Endothelial cell of umbilical vein (primary cell): ENCODE measurements at regions of chr1 and their contacts with region 1.

Region 1: DNA sequence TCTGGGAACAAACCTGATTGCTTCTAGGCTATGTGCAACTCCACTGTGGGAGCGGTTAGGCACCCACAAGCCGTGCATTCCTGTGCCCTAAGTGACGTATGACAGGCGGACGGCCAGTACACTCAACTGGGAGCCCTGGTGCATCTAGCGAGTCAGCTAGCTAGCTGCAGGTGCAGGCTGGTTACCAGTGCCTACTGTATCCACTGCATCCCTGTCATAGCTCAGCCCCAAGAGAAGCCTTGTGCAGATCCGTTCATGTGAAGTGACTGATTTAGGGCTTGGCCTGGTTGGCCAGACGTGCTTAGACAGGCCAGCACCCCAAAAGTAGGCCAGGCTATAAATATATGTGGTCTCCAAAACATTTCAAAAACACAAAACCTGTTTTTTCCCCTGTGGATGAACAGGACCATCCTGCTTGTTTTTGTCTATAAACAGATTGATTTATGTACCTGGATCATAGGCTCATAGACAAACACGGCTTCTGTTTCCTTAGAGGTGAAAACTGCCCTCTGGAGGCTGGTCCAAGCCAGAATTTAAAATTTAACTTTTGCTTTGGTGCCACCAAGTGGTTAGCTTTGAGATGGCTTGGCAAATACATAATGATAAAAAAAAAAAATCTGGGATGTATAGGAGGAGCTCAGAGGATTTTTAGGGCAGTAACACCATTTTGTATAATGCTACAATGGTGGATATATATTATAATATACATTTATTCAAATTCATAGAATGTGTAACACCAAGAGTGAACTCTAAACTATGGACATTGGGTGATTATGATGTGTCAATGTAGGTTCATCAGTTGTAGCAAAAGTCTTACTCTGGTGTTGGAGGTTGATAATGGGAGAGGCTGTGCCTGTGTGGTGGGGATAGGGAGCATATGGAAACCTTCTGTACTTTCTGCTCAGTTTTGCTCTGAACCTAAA is 68.5 kb downstream of the GIPC2 start:
- DNase-seq: peak; percentile 93
- H3K4me3 ChIP-seq: no peak overlapping the region
- H3K27ac ChIP-seq: no peak overlapping the region
- H3K4me1 ChIP-seq: no peaks in the 10 kb centered on the region
- H3K27me3 ChIP-seq: no peaks in the 10 kb centered on the region
- CTCF ChIP-seq: peak; percentile 57 to 76
- POLR2A ChIP-seq: no peak

Region 2: GRCh38 chr1:77143529-77144121 is 970.7 kb before region 1 on chr1:
- CTCF ChIA-PET with region 1: no interaction called
- POLR2A ChIA-PET with region 1: no interaction called
- dilution Hi-C with region 1: no loop called
- intact Hi-C with region 1: loop called (anchors 2 kb)
- DNase-seq: peak; percentile 16
- H3K4me3 ChIP-seq: no peak overlapping the region
- H3K27ac ChIP-seq: no peak overlapping the region
- H3K4me1 ChIP-seq: no peaks in the 10 kb centered on the region
- H3K27me3 ChIP-seq: no peaks in the 10 kb centered on the region
- CTCF ChIP-seq: no peak
- POLR2A ChIP-seq: no peak

Region 3: GRCh38 chr1:77948841-77949424 is 165.4 kb before region 1 on chr1:
- CTCF ChIA-PET with region 1: interaction called, 21 read pairs
- POLR2A ChIA-PET with region 1: no interaction called
- dilution Hi-C with region 1: no loop called
- intact Hi-C with region 1: loop called (anchors 1 kb)
- DNase-seq: peak; percentile 74
- H3K4me3 ChIP-seq: peak overlapping the region in 1 of 3 experiments; percentile 28
- H3K27ac ChIP-seq: peak overlapping the region; percentile 18
- H3K4me1 ChIP-seq: peaks cover 15% of the 10 kb centered on the region
- H3K27me3 ChIP-seq: no peaks in the 10 kb centered on the region
- CTCF ChIP-seq: peak; percentile 18 to 30
- POLR2A ChIP-seq: peak; percentile 34

Region 4: GRCh38 chr1:77986810-77987209 is 127.5 kb before region 1 on chr1:
- CTCF ChIA-PET with region 1: interaction called, 50 read pairs
- POLR2A ChIA-PET with region 1: no interaction called
- dilution Hi-C with region 1: no loop called
- intact Hi-C with region 1: no loop called
- DNase-seq: no peak
- H3K4me3 ChIP-seq: no peak overlapping the region
- H3K27ac ChIP-seq: no peak overlapping the region
- H3K4me1 ChIP-seq: no peaks in the 10 kb centered on the region
- H3K27me3 ChIP-seq: no peaks in the 10 kb centered on the region
- CTCF ChIP-seq: no peak
- POLR2A ChIP-seq: no peak

Region 5: GRCh38 chr1:78032996-78033796 is 81.1 kb before region 1 on chr1:
- CTCF ChIA-PET with region 1: interaction called, 15 read pairs
- POLR2A ChIA-PET with region 1: no interaction called
- dilution Hi-C with region 1: no loop called
- intact Hi-C with region 1: no loop called
- DNase-seq: no peak
- H3K4me3 ChIP-seq: no peak overlapping the region
- H3K27ac ChIP-seq: no peak overlapping the region
- H3K4me1 ChIP-seq: peaks cover 8% of the 10 kb centered on the region
- H3K27me3 ChIP-seq: no peaks in the 10 kb centered on the region
- CTCF ChIP-seq: no peak
- POLR2A ChIP-seq: no peak

Region 6: GRCh38 chr1:78070758-78071157 is 43.5 kb before region 1 on chr1:
- CTCF ChIA-PET with region 1: interaction called, 11 read pairs
- POLR2A ChIA-PET with region 1: no interaction called
- dilution Hi-C with region 1: no loop called
- intact Hi-C with region 1: no loop called
- DNase-seq: peak; percentile 87
- H3K4me3 ChIP-seq: no peak overlapping the region
- H3K27ac ChIP-seq: peak overlapping the region; percentile 48
- H3K4me1 ChIP-seq: peaks cover 54% of the 10 kb centered on the region
- H3K27me3 ChIP-seq: no peaks in the 10 kb centered on the region
- CTCF ChIP-seq: no peak
- POLR2A ChIP-seq: no peak

Region 7: DNA sequence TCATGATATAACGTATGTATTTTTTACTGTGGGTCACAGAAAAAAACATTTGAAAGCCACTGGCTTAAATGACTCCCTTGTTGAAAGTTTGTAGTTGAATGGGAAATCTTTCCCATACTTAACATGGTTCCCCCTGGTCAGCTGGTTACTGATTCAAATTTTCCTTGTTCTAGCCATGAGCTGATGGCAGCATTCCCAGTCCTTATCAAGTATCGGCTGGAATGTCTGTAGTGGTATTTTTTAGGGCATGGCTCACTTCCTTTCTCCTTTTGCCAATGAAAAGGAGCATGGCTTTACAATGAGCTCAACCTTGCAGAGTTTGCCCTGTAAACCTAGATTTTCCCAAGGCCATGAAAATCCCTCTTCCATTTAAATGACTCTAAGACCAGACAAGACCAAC is 12.8 kb before region 1 on chr1:
- CTCF ChIA-PET with region 1: interaction called, 49 read pairs
- POLR2A ChIA-PET with region 1: interaction called, 3 read pairs
- dilution Hi-C with region 1: no loop called
- intact Hi-C with region 1: no loop called
- DNase-seq: peak; percentile 99
- H3K4me3 ChIP-seq: no peak overlapping the region
- H3K27ac ChIP-seq: peak overlapping the region; percentile 98
- H3K4me1 ChIP-seq: peaks cover 52% of the 10 kb centered on the region
- H3K27me3 ChIP-seq: no peaks in the 10 kb centered on the region
- CTCF ChIP-seq: no peak
- POLR2A ChIP-seq: peak; percentile 60

Region 8: DNA sequence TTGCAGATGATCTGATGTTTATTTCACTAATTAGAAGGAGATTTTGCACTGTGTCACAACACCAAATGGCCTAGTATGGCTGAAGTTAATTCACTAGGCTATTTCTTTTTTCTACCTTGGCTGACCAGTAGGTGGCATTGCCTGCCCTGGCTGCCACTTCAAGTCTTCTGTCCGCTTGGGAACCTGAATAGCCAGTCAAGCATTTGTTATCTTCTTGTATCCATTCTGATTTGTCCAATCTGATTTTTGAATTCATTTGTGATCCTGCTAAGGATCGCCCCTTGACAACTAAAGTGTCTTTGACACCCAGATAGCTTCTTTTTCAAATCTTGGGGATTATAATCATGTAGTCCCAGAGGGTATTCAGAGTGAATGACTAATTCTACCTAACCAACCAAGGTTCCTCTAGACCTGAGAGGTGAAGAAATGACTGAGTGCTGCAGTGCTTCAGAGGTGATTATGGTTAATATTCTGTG is 30.8 kb after region 1 on chr1:
- CTCF ChIA-PET with region 1: no interaction called
- POLR2A ChIA-PET with region 1: no interaction called
- dilution Hi-C with region 1: no loop called
- intact Hi-C with region 1: no loop called
- DNase-seq: peak; percentile 62
- H3K4me3 ChIP-seq: no peak overlapping the region
- H3K27ac ChIP-seq: no peak overlapping the region
- H3K4me1 ChIP-seq: no peaks in the 10 kb centered on the region
- H3K27me3 ChIP-seq: no peaks in the 10 kb centered on the region
- CTCF ChIP-seq: peak; percentile 76 to 81
- POLR2A ChIP-seq: no peak